ENCODE measurements at regions of chr16 and their contacts with region 1.

Region 1: GRCh38 chr16:57637424-57637823 is 9.0 kb downstream of the ADGRG1 start:
- DNase-seq: no peak
- ATAC-seq: no peak
- H3K4me3 ChIP-seq: no peak overlapping the region
- H3K27ac ChIP-seq: no peak overlapping the region
- H3K4me1 ChIP-seq: peaks cover 81% of the 10 kb centered on the region
- H3K27me3 ChIP-seq: no peaks in the 10 kb centered on the region
- CTCF ChIP-seq: no peak
- EP300 ChIP-seq: no peak
- POLR2A ChIP-seq: no peak
- RAD21 ChIP-seq: no peak

Region 2: GRCh38 chr16:57609541-57610401 is 27.7 kb before region 1 on chr16:
- CTCF ChIA-PET with region 1: no interaction called
- POLR2A ChIA-PET with region 1: interaction called, 33 read pairs
- in situ Hi-C with region 1: no loop called
- intact Hi-C with region 1: no loop called
- DNase-seq: no peak
- ATAC-seq: no peak
- H3K4me3 ChIP-seq: no peak overlapping the region
- H3K27ac ChIP-seq: no peak overlapping the region
- H3K4me1 ChIP-seq: peaks cover 57% of the 10 kb centered on the region
- H3K27me3 ChIP-seq: peaks cover 4 to 27% of the 10 kb centered on the region in 2 experiments; a peak in 3 of 5 replicates
- CTCF ChIP-seq: peak; percentile 43; the same call in 1 of the 2 replicates
- EP300 ChIP-seq: no peak
- POLR2A ChIP-seq: no peak
- RAD21 ChIP-seq: no peak